Heart right ventricle (tissue), 16 donors: ENCODE measurements at regions of chr2 and their contacts with region 1.

Region 1: DNA sequence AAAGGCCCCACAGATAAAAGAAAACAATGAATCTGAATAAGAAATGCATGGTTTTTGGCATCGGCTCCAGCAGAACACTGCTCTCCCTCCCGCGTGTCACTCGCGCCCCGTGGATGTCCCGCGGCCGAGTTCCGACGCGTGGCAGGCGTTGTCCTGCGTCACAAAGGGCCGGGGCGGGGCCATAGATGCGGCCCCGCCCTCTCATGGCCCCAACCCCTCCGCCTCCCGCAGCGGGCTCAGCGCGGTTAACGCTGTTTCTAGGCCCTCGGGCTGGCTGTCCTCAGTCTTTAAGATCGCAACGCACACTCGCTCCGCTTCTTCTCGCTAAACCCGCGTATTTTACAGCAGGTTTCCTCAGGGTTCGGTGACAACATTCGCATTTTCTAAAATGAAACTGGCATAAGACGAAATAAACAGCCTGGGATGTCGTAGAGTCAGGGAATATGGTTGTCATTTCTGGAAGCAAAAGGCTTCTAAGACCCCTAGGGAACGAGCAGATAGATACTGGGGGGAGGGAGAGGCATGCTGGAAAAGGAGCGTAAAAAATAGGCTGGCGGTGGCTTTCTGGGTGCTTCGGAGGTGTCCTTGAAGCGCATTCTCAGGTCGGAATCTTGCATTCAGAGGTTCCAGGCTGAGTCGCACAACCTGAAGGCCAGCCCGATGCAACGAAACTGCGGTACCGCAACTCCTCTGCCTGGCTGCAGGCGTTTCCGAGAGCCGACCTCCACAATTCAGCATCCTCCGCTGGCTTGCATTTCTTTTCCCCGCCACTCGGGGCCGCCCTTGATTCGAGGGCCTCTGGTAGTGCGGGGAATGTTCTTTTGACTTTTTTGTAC is at the start of gene FKBP7:
- DNase-seq: peak; percentile 86 to 89
- ATAC-seq: peak; percentile 84 to 94 (median 86)
- H3K4me3 ChIP-seq: peak within 1 kb of the TSS; percentile 18 to 92 (median 75)
- H3K27ac ChIP-seq: peak within 1 kb of the TSS; percentile 81 to 97 (median 93)
- H3K4me1 ChIP-seq: peaks cover 0 to 57% (median 48%) of the 10 kb centered on the region in 9 donors
- H3K27me3 ChIP-seq: no peaks in the 10 kb centered on the region
- CTCF ChIP-seq: peak; percentile 39 to 82 (median 64)
- total RNA-seq, gene FKBP7: 6.1 to 11.3 (median 9.2) TPM

Region 2: GRCh38 chr2:178450774-178451525 is 27.7 kb before region 1 on chr2 and contains the starts of genes PJVK and PRKRA:
- intact Hi-C with region 1: loop called in 4 of 10 experiments (anchors 1 to 2 kb)
- DNase-seq: peak; percentile 97 to 99
- ATAC-seq: peak; percentile 98 to 99 (median 99)
- H3K4me3 ChIP-seq: peak within 1 kb of the TSS; percentile 51 to 99 (median 86)
- H3K27ac ChIP-seq: peak within 1 kb of the TSS; percentile 94 to 99 (median 97)
- H3K4me1 ChIP-seq: peaks cover 10 to 40% (median 30%) of the 10 kb centered on the region in 9 donors
- H3K27me3 ChIP-seq: no peaks in the 10 kb centered on the region
- CTCF ChIP-seq: peak in 5 of 9 donors; percentile 12 to 42 (median 22)
- total RNA-seq, gene PJVK: 0.57 to 2.0 (median 1.7) TPM
- total RNA-seq, gene PRKRA: 39.8 to 55.3 (median 44.3) TPM

Region 3: DNA sequence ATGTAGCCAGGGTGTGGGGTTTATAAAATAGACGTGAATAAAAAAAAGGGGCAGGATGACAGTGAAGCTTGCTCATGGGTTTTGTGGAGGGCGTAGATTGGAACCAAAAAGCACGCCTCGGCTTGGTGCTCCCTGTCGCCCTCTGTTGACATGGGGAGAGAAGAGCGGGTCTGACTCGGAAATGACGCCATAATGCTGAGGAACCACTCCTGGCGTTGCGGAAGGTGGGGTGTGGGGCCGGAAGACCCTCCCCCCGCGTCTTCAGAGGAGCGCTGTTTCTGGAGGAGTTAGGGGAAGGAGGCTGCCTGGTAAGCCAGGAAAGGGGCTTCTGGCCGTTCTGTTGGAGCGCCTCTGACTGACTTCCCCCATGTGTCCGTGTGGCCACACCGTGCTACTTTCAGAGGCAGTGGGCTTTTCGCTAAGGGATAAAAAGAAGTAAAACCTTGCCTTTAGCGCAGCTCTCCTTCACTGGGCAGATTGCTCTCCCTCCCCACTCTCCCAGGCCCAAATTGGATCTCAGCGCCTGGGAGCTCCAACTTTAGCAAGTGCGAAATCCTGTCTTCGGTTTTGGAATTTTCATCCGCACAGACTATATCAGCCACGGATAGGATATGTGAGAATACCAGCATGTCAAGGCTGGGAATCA is 44.4 kb after region 1 on chr2:
- intact Hi-C with region 1: loop called in 2 of 10 experiments (anchors 2 to 5 kb)
- DNase-seq: peak; percentile 78 to 80
- ATAC-seq: peak; percentile 86 to 95 (median 90)
- H3K4me3 ChIP-seq: peak overlapping the region; percentile 22 to 72 (median 61)
- H3K27ac ChIP-seq: peak overlapping the region in 9 of 10 donors; percentile 50 to 87 (median 71)
- H3K4me1 ChIP-seq: peaks cover 0 to 27% (median 2%) of the 10 kb centered on the region in 9 donors
- H3K27me3 ChIP-seq: no peaks in the 10 kb centered on the region
- CTCF ChIP-seq: peak; percentile 62 to 86 (median 77)

Region 4: DNA sequence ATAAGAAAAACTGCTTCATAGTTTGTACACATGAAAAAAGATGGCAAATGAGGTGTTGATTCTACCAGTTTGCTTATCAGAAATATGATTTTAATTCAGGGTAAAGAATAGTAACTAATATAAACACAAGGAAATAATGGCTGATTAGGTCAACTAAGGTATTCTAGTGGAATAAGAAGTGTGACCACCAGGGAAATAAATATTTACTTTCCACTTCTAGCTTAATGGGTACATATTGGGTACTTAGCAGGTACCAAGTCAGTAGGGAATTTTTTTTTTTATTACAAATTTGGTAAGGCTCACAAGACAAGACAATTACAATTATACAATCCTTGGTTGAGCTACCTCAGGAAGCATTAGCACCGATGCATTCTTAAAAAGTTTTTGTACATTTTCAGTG is 137.3 kb after region 1 on chr2:
- intact Hi-C with region 1: no loop called
- DNase-seq: no peak
- ATAC-seq: no peak
- H3K4me3 ChIP-seq: no peak overlapping the region
- H3K27ac ChIP-seq: peak overlapping the region in 1 of 10 donors; percentile 14
- H3K4me1 ChIP-seq: peaks cover 0 to 57% (median 18%) of the 10 kb centered on the region in 9 donors
- H3K27me3 ChIP-seq: no peaks in the 10 kb centered on the region
- CTCF ChIP-seq: no peak

Region 5: DNA sequence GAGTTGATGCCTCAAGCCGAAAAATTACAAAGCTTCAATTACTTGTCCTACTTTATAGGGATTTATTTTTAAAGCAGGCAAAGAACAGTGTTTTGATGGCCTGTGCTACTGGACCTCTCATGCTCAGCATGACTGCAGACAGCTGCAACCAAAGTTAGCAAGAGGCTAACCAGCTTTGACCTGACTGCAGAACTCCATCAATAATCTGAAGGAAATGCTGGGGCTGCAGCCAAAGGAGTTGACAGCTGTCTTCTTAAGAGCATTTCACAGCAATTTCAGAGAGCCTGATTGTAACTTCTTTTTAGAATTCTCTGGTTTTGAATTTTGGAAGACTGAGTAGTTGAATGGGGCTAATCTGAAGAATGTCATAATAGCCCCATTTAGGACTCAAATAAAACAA is 832.4 kb after region 1 on chr2:
- intact Hi-C with region 1: no loop called
- DNase-seq: no peak
- ATAC-seq: peak in 1 of 8 donors; percentile 69
- H3K4me3 ChIP-seq: no peak overlapping the region
- H3K27ac ChIP-seq: no peak overlapping the region
- H3K4me1 ChIP-seq: no peaks in the 10 kb centered on the region
- H3K27me3 ChIP-seq: no peaks in the 10 kb centered on the region
- CTCF ChIP-seq: no peak